Heart right ventricle (tissue), 16 donors: ENCODE measurements at regions of chr5 and their contacts with region 1.

Region 1: GRCh38 chr5:104299998-104300706 is 737.6 kb upstream of the NUDT12 start:
- DNase-seq: no peak
- ATAC-seq: no peak
- H3K4me3 ChIP-seq: no peak overlapping the region
- H3K27ac ChIP-seq: no peak overlapping the region
- H3K4me1 ChIP-seq: no peaks in the 10 kb centered on the region
- H3K27me3 ChIP-seq: no peaks in the 10 kb centered on the region
- CTCF ChIP-seq: no peak

Region 2: DNA sequence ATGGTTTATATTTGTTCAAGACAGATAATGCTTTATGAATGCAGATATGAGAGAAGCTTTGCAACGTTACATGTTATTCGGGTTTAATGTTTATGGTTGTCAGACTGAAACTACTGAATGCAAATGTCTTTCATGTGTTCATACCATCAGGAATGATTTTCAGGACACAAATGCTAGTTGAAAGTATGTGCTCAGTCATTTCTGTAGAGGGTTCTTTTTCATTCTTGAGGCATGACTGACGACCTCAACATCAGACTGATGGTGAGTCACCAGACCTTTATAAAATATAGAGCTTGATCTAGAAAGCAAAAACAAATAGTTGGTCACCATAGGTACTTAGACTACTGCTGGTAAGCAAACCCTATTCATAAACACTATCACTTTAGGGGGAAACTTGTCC is 450.2 kb before region 1 on chr5:
- intact Hi-C with region 1: no loop called
- DNase-seq: no peak
- ATAC-seq: no peak
- H3K4me3 ChIP-seq: no peak overlapping the region
- H3K27ac ChIP-seq: no peak overlapping the region
- H3K4me1 ChIP-seq: no peaks in the 10 kb centered on the region
- H3K27me3 ChIP-seq: no peaks in the 10 kb centered on the region
- CTCF ChIP-seq: no peak

Region 3: GRCh38 chr5:103918668-103919367 is 381.3 kb before region 1 on chr5:
- intact Hi-C with region 1: no loop called
- DNase-seq: no peak
- ATAC-seq: no peak
- H3K4me3 ChIP-seq: no peak overlapping the region
- H3K27ac ChIP-seq: no peak overlapping the region
- H3K4me1 ChIP-seq: no peaks in the 10 kb centered on the region
- H3K27me3 ChIP-seq: no peaks in the 10 kb centered on the region
- CTCF ChIP-seq: no peak

Region 4: DNA sequence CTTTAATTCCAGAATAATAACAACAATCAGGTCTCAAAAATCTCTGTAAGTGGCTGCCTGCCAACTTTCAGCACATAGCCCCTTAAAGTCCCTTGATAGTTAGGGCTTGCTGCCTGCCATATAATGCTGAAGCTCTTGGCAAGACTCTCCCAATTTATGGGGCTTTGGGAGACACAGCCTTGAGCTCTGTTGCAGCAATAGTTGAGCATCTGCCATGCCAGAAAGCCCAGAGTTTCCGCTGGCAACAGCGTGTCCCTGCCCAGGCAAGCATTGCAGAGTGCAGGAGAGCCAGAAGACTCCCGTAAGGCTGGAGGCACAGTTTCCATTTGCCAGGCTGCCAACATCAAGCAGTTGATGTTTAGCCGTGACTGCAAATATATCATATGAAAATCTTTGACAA is 59.1 kb before region 1 on chr5:
- intact Hi-C with region 1: no loop called
- DNase-seq: no peak
- ATAC-seq: no peak
- H3K4me3 ChIP-seq: no peak overlapping the region
- H3K27ac ChIP-seq: no peak overlapping the region
- H3K4me1 ChIP-seq: no peaks in the 10 kb centered on the region
- H3K27me3 ChIP-seq: no peaks in the 10 kb centered on the region
- CTCF ChIP-seq: no peak

Region 5: DNA sequence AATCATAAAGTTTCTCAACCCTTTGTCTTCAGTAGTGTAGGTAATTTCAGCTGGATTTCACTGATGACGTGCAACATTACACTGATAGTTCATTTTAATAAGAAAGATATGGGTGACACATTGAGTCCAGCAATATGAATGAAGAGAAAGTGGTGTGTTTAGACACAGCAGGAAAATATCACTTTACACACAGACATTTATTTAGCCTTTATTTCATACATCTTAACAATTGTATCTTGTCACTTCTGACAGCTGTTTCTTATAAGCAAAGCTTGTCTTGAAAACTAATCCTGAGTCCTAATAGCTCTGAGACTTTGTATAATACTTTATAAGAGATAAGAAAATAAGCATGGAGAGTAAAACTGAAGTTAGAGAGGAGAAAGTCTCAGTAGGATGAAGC is 17.0 kb before region 1 on chr5:
- intact Hi-C with region 1: loop called in 1 of 10 experiments (anchors 1 kb)
- DNase-seq: no peak
- ATAC-seq: no peak
- H3K4me3 ChIP-seq: no peak overlapping the region
- H3K27ac ChIP-seq: no peak overlapping the region
- H3K4me1 ChIP-seq: no peaks in the 10 kb centered on the region
- H3K27me3 ChIP-seq: no peaks in the 10 kb centered on the region
- CTCF ChIP-seq: no peak

Region 6: GRCh38 chr5:104353371-104353770 is 53.2 kb after region 1 on chr5:
- intact Hi-C with region 1: loop called in 1 of 10 experiments (anchors 10 kb)
- DNase-seq: no peak
- ATAC-seq: no peak
- H3K4me3 ChIP-seq: no peak overlapping the region
- H3K27ac ChIP-seq: no peak overlapping the region
- H3K4me1 ChIP-seq: no peaks in the 10 kb centered on the region
- H3K27me3 ChIP-seq: no peaks in the 10 kb centered on the region
- CTCF ChIP-seq: no peak

Region 7: DNA sequence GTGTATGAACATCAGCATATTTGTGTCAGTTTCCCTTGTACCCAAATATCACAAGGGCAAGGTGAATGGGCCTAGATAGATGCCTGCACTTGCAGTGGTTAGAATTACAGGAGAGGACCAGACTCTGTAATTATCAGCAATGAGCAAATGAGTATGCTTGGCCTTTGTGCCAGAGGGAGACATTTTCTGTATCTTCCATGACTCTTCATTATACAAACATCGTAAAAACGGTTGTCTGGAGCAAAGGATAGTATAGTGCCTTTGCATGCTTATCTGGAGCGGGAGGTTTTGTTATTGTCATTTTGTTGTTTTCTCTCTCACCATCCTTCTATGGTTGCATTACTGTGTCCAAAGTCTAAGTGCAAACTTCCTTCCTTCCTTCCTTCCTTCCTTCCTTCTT is 830.9 kb after region 1 on chr5:
- intact Hi-C with region 1: no loop called
- DNase-seq: no peak
- ATAC-seq: no peak
- H3K4me3 ChIP-seq: no peak overlapping the region
- H3K27ac ChIP-seq: no peak overlapping the region
- H3K4me1 ChIP-seq: no peaks in the 10 kb centered on the region
- H3K27me3 ChIP-seq: no peaks in the 10 kb centered on the region
- CTCF ChIP-seq: no peak